CD14-positive monocyte (primary cell): ENCODE measurements at regions of chr11 and their contacts with region 1.

Region 1: DNA sequence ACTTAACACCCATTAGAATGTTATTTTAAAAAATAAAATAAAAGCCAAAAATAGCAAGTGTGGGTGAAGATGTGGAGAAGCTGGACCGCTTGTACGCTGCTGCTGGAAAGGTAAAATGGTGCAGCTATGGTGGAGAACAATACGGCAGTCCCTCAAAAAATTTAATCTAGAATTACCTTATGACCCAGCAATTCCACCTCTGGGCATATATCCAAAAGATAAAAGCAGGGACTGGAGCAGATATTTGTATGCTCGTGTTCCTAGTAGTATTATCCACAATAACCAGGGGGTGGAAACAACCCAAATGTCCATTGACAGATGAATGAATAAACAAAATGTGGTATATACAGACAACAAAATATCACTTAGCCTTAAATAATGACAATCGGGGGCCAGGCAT is 6.1 kb upstream of the APOA5 start:
- DNase-seq: no peak
- H3K4me3 ChIP-seq: no peak overlapping the region
- H3K4me3 Mint-ChIP-seq: no peak overlapping the region
- H3K27ac ChIP-seq: no peak overlapping the region
- H3K27ac Mint-ChIP-seq: no peak overlapping the region
- H3K4me1 ChIP-seq: no peaks in the 10 kb centered on the region
- H3K4me1 Mint-ChIP-seq: peaks cover 2% of the 10 kb centered on the region
- H3K27me3 ChIP-seq: no peaks in the 10 kb centered on the region
- H3K27me3 Mint-ChIP-seq: peaks cover 0 to 5% (median 0%) of the 10 kb centered on the region in 3 donors
- CTCF ChIP-seq: no peak

Region 2: GRCh38 chr11:117107701-117108590 is 310.1 kb after region 1 on chr11:
- intact Hi-C with region 1: loop called in 1 of 2 experiments (anchors 5 kb)
- DNase-seq: no peak
- H3K4me3 ChIP-seq: no peak overlapping the region
- H3K4me3 Mint-ChIP-seq: no peak overlapping the region
- H3K27ac ChIP-seq: no peak overlapping the region
- H3K27ac Mint-ChIP-seq: no peak overlapping the region
- H3K4me1 ChIP-seq: no peaks in the 10 kb centered on the region
- H3K4me1 Mint-ChIP-seq: no peaks in the 10 kb centered on the region
- H3K27me3 ChIP-seq: no peaks in the 10 kb centered on the region
- H3K27me3 Mint-ChIP-seq: peaks cover 0 to 2% (median 2%) of the 10 kb centered on the region in 3 donors
- CTCF ChIP-seq: no peak